ENCODE measurements at regions of chr6 and their contacts with region 1.

Region 1: GRCh38 chr6:121426686-121427085 is 8.8 kb upstream of the GJA1 start:
- DNase-seq: no peak
- H3K4me3 ChIP-seq: no peak overlapping the region
- H3K27ac ChIP-seq: no peak overlapping the region
- H3K4me1 ChIP-seq: no peaks in the 10 kb centered on the region
- H3K27me3 ChIP-seq: no peaks in the 10 kb centered on the region
- CTCF ChIP-seq: no peak

Region 2: DNA sequence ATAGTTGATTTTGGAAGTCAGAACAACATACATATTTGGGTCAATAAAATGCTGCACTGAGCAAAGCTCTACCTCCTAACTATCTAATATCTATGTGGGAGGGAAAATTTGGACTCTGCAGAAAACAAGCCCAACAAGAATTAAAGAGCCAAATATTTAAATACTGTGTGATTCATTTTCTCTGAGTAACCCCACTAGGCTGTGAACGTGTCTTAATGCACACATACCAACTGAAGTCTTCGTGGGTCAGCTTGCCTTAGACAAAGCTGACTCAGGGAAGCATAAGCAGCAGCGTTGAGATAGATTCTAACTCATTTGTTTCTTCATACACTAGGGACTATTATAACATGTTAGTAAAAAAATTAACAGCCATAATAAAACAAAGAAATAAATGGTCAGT is 123.0 kb after region 1 on chr6:
- intact Hi-C with region 1: no loop called
- DNase-seq: no peak
- H3K4me3 ChIP-seq: no peak overlapping the region
- H3K27ac ChIP-seq: no peak overlapping the region
- H3K4me1 ChIP-seq: no peaks in the 10 kb centered on the region
- H3K27me3 ChIP-seq: no peaks in the 10 kb centered on the region
- CTCF ChIP-seq: no peak

Region 3: DNA sequence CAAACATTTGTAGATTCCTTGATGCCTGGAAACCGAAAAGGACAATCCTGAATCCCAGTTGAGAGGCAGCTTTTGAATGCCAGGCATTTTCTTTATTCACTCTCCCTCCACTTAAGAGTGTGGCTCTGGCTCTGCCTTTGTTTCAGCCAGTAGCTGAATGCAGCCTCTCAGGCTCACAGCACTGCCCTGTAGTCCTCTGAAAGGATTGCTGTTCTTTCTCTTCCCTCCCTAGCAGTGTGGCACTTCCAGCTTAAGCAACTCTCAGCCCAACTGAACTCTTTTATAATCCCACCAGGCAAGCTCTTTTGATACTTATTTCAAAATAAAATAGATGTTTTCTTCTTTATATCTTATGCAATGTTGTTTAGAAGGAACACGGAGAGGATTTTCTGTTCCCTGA is 424.4 kb after region 1 on chr6:
- intact Hi-C with region 1: loop called (anchors 5 kb)
- DNase-seq: no peak
- H3K4me3 ChIP-seq: no peak overlapping the region
- H3K27ac ChIP-seq: no peak overlapping the region
- H3K4me1 ChIP-seq: no peaks in the 10 kb centered on the region
- H3K27me3 ChIP-seq: no peaks in the 10 kb centered on the region
- CTCF ChIP-seq: no peak